ENCODE measurements at regions of chr15 and their contacts with region 1.

Region 1: DNA sequence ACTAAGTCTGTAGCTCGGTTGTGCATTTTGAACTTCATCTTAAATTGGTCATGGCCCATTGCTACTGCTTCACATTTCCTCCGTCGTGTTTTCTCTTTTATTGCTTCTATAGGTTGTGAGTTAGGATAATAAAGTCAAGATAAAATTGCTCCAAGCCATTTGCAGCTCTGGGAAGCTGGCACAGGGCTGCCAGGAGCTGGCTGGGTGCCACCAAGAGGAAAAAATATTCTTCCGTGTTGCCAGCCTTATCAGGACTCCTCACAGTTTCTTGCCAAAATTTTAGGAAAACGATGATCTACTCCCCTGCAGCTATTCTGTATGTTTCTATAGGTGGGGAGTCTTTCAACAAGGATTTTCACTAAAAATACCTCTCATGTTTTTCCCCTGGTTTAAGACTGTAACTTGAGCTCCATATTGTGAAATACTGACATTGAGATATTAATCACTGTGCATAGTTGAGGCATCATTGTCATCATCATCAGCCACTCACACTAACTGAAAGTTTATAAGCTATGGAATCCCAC is 55.5 kb upstream of the PIAS1 start:
- DNase-seq: peak; percentile 85
- ATAC-seq: peak; percentile 62
- H3K4me3 ChIP-seq: peak overlapping the region; percentile 8; the same call in 1 of the 2 replicates
- H3K27ac ChIP-seq: peak overlapping the region; percentile 88
- H3K4me1 ChIP-seq: peaks cover 25% of the 10 kb centered on the region
- H3K27me3 ChIP-seq: no peaks in the 10 kb centered on the region
- CTCF ChIP-seq: no peak

Region 2: DNA sequence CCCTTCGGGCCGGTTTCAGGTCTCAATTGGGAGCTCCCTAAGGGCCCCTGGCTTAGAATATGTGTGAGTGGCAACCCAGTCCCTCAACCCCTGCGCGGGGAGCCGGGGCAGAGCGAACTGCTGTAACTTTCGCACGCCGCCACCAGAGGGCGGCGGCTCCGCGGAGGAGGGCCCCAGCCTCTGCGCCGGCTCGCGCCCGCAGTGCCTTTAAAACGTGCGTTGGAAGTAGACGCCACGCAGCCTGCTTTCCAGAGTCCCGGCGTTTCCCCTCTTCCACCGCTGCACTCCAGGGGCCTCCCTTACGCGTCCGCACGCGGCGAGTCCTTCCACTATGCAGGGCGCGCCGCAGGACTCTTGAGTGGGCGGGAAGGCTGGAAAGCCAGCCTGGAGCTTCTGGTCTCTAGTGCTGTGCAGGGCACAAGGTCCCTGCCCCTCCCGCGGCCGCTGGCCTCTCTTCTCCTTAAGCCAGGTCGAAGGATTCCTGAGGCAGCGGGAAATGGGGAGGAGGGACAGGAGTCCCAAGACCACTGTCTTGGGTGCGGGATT is 135.1 kb before region 1 on chr15:
- CTCF ChIA-PET with region 1: no interaction called
- POLR2A ChIA-PET with region 1: no interaction called
- intact Hi-C with region 1: loop called (anchors 10 kb)
- DNase-seq: peak; percentile 74
- ATAC-seq: peak; percentile 84
- H3K4me3 ChIP-seq: peak overlapping the region; percentile 73
- H3K27ac ChIP-seq: no peak overlapping the region
- H3K4me1 ChIP-seq: peaks cover 18% of the 10 kb centered on the region
- H3K27me3 ChIP-seq: no peaks in the 10 kb centered on the region
- CTCF ChIP-seq: peak; percentile 82

Region 3: GRCh38 chr15:67976506-67977073 is 22.1 kb before region 1 on chr15:
- CTCF ChIA-PET with region 1: no interaction called
- POLR2A ChIA-PET with region 1: no interaction called
- intact Hi-C with region 1: loop called (anchors 1 kb)
- DNase-seq: no peak
- ATAC-seq: peak; percentile 48
- H3K4me3 ChIP-seq: no peak overlapping the region
- H3K27ac ChIP-seq: no peak overlapping the region
- H3K4me1 ChIP-seq: no peaks in the 10 kb centered on the region
- H3K27me3 ChIP-seq: no peaks in the 10 kb centered on the region
- CTCF ChIP-seq: no peak

Region 4: DNA sequence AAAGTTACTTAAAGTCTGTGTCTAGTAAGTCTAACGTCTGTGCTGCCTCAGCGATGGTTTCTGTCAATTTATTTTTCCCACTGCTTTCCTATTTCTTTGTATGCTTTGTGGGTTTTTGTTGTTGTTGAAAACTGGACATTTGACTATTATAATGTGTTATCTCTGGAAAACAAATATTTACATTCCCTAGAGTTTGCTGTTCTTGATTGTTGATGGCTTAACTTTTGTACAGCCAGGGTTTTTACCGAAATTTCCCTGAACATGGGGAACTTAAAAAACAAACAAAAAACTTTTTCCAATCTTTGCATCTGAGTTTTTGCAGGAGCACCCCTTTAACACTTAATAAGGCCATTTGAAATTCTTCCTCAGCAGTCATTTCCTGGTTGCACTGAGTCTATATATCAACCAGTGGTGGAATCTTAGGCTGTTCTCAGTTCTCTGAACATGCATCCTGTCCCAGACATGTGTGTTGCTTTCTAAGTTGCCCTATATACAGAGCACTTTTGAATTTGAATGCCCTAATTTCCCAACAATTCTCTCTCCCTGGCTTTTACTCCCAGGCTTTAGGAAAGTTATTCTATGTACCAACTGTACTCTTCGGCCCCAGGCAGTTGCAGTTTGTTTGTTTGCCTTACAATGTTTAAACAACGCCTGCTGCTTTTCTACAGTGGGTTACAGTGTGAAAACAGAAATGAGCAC is 43.6 kb after region 1 on chr15:
- CTCF ChIA-PET with region 1: no interaction called
- POLR2A ChIA-PET with region 1: no interaction called
- intact Hi-C with region 1: loop called (anchors 5 kb)
- DNase-seq: no peak
- ATAC-seq: peak; percentile 40; the same call in 1 of the 2 replicates
- H3K4me3 ChIP-seq: no peak overlapping the region
- H3K27ac ChIP-seq: no peak overlapping the region
- H3K4me1 ChIP-seq: peaks cover 10% of the 10 kb centered on the region; the same call in 1 of the 2 replicates
- H3K27me3 ChIP-seq: no peaks in the 10 kb centered on the region
- CTCF ChIP-seq: no peak

Measured in PC-3 (cell line).